ENCODE measurements at regions of chr3 and their contacts with region 1.

Region 1: DNA sequence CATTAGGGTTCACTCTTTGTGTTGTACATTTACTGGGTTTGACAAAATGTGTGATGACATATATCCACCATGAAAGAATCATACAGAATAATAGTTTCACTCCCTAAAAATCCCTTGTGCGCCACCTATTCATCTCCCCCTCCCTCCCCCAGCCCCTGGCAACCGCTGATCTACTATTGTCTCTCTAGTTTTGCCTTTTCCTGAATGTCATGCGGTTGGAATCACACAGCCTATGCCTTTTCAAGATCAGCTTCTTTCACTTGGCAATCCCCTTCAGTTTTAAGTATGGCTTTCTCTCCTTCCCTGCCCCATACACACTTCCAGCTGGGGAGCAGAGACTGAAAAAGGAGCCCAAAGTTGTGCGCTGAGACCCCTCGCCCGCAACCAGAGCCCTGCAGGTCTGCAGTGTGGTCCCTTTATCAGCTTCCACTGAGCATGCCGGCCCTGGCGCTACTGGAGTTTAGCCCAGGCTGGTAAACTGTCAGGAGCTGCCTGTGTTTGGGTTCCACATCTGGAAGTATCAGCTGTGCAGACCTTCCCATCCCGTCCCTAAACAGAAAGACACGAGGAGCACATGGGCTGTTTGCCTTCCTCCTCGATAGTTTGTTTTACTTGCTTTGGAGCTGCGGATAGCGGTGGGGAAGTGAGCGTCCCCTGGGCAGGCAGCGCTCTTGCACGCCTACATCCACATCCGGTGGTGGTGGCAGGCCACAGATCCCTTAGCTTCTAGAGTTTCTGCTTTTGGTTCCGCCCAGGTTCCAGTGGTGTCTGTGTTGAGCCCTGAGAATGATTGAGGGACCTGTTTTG is 12.3 kb downstream of the BOC start:
- H3K4me3 Mint-ChIP-seq: no peak overlapping the region
- H3K27ac Mint-ChIP-seq: peak overlapping the region; percentile 65
- H3K4me1 Mint-ChIP-seq: peaks cover 50% of the 10 kb centered on the region
- H3K27me3 Mint-ChIP-seq: peaks cover 28% of the 10 kb centered on the region

Region 2: GRCh38 chr3:112794622-112795172 is 429.0 kb before region 1 on chr3:
- intact Hi-C with region 1: no loop called
- H3K4me3 Mint-ChIP-seq: peak overlapping the region; percentile 24
- H3K27ac Mint-ChIP-seq: peak overlapping the region; percentile 91
- H3K4me1 Mint-ChIP-seq: peaks cover 48% of the 10 kb centered on the region
- H3K27me3 Mint-ChIP-seq: no peaks in the 10 kb centered on the region

Region 3: GRCh38 chr3:113019182-113020137 is 204.2 kb before region 1 on chr3:
- intact Hi-C with region 1: no loop called
- H3K4me3 Mint-ChIP-seq: peak overlapping the region; percentile 94
- H3K27ac Mint-ChIP-seq: peak overlapping the region; percentile 94
- H3K4me1 Mint-ChIP-seq: peaks cover 45% of the 10 kb centered on the region
- H3K27me3 Mint-ChIP-seq: no peaks in the 10 kb centered on the region

Region 4: DNA sequence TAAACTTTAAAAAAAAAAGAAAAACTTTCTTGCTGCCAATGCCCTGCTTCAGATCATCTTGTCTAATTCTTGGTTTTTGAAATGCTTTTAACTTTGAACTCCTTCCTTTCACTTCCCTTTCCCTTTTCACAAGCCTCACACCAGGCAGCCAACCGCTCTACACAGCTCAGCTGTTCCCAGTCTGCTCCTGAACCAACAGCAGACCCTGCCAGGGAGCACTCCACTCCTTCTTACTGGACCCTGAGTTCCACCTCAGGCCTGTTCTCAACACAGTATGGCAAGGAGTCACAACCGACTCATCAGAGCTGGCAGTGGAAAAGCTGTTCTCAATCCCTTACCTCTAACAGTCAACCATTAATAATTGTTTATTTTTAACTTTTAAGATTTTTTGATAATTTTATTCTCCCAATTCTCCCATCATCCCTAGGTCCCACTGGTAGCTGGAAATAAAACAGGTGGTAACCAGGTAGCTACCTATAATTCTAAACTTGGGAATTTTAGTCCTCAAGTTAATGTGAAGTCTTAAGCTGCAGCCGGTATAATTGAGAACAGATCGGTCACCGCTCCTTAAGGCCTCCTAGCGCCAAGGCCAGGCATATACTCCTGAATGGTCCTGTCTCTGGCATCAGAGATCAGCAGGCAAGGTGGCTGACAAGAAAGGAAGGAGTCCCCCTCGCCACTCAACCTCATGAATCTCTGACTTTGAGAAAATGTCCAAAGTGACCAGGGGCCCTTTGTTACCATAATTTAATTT is 31.6 kb after region 1 on chr3:
- intact Hi-C with region 1: loop called (anchors 5 kb)
- H3K4me3 Mint-ChIP-seq: peak overlapping the region; percentile 15
- H3K27ac Mint-ChIP-seq: peak overlapping the region; percentile 78
- H3K4me1 Mint-ChIP-seq: peaks cover 30% of the 10 kb centered on the region
- H3K27me3 Mint-ChIP-seq: peaks cover 6% of the 10 kb centered on the region

Measured in dendritic cell treated with granulocyte-macrophage colony-stimulating factor and Interleukin-4, amounts not matched to agents 40 ng/mL and 50 ng/mL, for 4 days (primary cell).